Activated naive CD4-positive, alpha-beta T cell treated with anti-CD3 and anti-CD28 coated beads for 36 hours (primary cell): ENCODE measurements at regions of chr17 and their contacts with region 1.

Region 1: DNA sequence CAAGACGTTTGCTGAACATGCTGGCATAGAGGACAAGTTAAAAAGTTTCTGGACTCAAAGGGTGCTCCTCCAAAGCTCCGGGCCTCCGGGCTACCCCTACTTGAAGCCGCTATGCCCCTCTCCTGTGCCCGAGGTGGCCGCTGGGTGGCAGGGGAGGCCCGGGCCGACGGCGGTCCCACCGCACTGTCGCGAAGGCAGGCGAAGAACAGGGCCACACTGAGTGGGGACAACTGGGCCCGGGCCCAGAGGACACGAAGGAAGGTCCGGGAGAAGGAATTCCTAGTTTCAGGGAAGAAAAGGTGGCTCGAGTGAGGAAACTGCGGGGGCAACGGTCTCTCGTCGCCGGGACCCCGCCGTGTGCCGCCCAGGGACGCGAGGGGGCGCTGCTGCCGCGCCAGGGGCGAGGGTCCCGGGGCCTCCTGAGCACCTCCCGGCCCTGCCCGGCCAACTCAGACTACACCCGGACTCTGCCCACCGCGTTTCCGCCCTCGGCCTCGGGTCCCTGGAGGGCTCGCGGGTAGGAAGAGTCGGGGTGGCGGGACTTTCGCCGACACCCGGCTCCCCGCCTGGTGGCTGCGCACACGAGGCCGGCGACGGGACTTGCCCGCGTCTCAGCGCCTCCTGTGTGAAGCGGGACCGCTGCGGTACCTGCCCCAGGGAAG is 885 bp upstream of the CHCT1 start:
- DNase-seq: peak; percentile 84
- H3K4me3 Mint-ChIP-seq: peak overlapping the region; percentile 73
- H3K27ac Mint-ChIP-seq: no peak overlapping the region
- H3K4me1 Mint-ChIP-seq: peaks cover 8% of the 10 kb centered on the region
- H3K27me3 Mint-ChIP-seq: no peaks in the 10 kb centered on the region

Region 2: DNA sequence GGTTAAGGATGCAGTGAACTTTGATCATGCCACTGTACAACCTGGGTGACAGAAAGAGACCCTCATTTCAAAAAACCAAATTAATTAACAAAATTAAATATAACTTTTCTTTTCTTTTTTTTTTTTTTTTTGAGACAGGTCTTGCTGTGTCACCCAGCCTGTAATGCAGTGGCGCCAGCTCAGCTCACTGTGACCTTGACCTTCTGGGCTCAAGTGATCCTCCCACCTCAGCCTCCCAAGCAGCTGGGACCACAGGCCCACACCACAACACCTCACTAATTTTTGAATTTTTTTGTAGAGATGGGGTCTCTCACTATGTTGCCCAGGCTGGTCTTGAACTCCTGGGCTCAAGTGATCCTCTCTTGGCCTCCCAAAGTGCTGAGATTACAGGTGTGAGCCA is 147.2 kb after region 1 on chr17:
- CTCF ChIA-PET with region 1: interaction called, 3 read pairs
- intact Hi-C with region 1: loop called (anchors 5 kb)
- DNase-seq: no peak
- H3K4me3 Mint-ChIP-seq: no peak overlapping the region
- H3K27ac Mint-ChIP-seq: no peak overlapping the region
- H3K4me1 Mint-ChIP-seq: no peaks in the 10 kb centered on the region
- H3K27me3 Mint-ChIP-seq: no peaks in the 10 kb centered on the region

Region 3: GRCh38 chr17:60641810-60642220 is 220.4 kb after region 1 on chr17:
- CTCF ChIA-PET with region 1: interaction called, 4 read pairs
- intact Hi-C with region 1: loop called (anchors 1 kb)
- DNase-seq: peak; percentile 74
- H3K4me3 Mint-ChIP-seq: no peak overlapping the region
- H3K27ac Mint-ChIP-seq: no peak overlapping the region
- H3K4me1 Mint-ChIP-seq: peaks cover 13% of the 10 kb centered on the region
- H3K27me3 Mint-ChIP-seq: no peaks in the 10 kb centered on the region